ENCODE measurements at regions of chr18 and their contacts with region 1.

Region 1: DNA sequence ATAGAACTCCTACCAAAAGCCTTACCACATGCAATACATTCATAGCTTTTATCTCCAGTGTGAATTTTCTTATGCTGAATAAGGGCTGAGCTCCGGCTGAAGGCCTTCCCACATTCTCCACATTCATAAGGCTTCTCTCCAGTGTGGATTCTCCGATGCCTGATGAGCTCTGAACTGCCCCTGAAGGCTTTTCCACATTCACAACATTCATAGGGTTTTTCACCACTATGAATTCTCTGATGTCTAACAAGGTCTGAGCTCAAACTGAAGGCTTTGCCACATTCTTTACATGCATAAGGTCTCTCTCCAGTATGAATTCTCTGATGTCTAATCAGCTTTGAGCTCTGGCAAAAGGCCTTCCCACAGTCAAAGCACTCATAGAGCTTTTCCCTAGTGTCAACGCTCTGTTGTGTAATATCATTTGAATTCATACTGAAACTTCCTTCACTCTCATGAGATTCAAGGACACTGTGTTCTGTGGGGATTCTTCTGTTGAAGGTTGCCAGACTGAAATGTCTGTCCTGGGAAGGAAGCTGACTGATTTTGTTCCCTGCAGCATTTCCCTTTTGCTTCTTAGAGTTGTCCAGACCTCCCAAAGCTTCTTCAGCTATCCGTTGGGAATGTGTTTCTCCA is 12.9 kb downstream of the ZNF397 start:
- DNase-seq: no peak
- H3K4me3 ChIP-seq: no peak overlapping the region
- H3K27ac ChIP-seq: no peak overlapping the region
- H3K4me1 ChIP-seq: no peaks in the 10 kb centered on the region
- H3K27me3 ChIP-seq: no peaks in the 10 kb centered on the region
- CTCF ChIP-seq: no peak
- POLR2A ChIP-seq: no peak

Region 2: DNA sequence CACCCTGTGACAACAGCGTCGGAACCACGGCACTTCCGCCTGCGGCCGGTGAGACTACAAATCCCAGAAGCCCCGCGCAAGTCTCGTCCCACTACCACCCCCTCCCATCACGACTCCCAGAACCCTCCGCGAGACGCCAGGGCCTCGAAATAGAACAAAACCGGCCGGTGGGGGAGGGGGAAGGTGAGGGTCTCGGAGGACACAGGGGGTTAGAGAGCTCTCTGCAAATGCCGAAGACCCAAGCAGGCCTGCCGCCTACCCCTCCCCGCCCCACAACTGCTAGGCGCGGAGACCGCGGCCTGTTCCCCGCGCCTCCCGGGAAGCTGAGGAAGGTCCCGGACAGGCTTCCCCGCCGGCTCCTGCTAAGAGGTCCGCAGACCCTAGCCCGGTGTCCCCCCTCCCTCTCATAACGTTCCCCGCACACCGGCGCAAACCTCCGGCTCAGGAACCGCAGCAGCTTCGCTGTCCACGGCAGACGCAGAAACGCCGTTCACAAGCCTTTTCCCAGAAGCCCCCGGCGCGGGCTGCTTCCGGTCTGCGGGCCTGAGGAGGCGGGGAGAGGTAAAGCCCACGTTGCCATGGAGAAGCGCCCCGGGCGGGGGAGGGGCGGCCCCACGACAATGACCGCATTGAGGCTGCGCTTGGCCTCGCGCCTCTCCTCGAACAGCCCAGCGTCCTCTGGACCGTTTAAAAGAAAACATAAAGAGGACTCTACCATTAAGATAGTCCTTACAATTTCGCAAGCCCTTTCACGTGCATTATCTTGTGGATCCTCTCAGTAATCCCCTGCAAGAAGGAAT is 90.4 kb after region 1 on chr18 and contains the start of gene ZNF24:
- intact Hi-C with region 1: loop called (anchors 10 kb)
- DNase-seq: peak; percentile 98
- H3K4me3 ChIP-seq: peak within 1 kb of the TSS; percentile 98 to 99
- H3K27ac ChIP-seq: peak within 1 kb of the TSS; percentile 99
- H3K4me1 ChIP-seq: peaks cover 18% of the 10 kb centered on the region
- H3K27me3 ChIP-seq: no peaks in the 10 kb centered on the region
- CTCF ChIP-seq: no peak
- POLR2A ChIP-seq: peak; percentile 12
- total RNA-seq, gene ZNF24: 38.9 to 39.8 TPM